Heart right ventricle (tissue), 16 donors: ENCODE measurements at regions of chr4 and their contacts with region 1.

Region 1: GRCh38 chr4:38179690-38180377 is 219.6 kb downstream of the PTTG2 start:
- DNase-seq: peak; percentile 49 to 71
- ATAC-seq: peak; percentile 32 to 76 (median 61)
- H3K4me3 ChIP-seq: no peak overlapping the region
- H3K27ac ChIP-seq: peak overlapping the region in 1 of 10 donors; percentile 1
- H3K4me1 ChIP-seq: peaks cover 2 to 53% (median 21%) of the 10 kb centered on the region in 9 donors
- H3K27me3 ChIP-seq: no peaks in the 10 kb centered on the region
- CTCF ChIP-seq: peak; percentile 89 to 97 (median 94)

Region 2: DNA sequence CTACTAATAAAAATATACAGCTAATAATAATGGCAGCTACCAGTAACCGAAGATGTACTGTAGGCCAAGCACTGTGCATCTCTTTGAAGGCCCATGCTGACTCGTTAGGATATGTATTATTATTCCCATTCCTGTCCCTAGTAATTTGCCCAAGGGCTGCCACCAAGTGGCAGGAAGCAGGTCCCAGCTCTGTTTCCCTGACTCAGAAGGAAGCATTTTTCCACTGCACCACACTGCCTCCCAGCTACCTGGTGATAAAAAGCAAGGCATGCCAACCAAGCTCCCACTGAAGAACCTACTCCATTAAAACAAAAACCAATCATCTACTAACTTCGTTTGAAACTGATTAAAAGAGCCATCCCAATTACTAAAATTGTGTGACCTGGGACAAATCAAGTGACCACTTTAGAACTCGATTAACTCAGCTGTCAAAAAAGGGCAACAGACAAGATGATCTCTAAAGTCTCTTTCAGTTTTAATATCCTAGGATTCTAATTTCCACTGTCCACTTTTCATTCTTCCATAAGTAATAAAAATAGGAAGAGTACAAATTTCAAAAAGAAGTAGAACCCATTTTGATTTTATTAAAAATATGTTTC is 377.7 kb before region 1 on chr4:
- intact Hi-C with region 1: loop called in 1 of 10 experiments (anchors 10 kb)
- DNase-seq: peak in 1 of 2 donors; percentile 53
- ATAC-seq: peak; percentile 30 to 89 (median 79)
- H3K4me3 ChIP-seq: no peak overlapping the region
- H3K27ac ChIP-seq: no peak overlapping the region
- H3K4me1 ChIP-seq: peaks cover 0 to 7% (median 0%) of the 10 kb centered on the region in 9 donors
- H3K27me3 ChIP-seq: no peaks in the 10 kb centered on the region
- CTCF ChIP-seq: peak in 8 of 9 donors; percentile 21 to 77 (median 52)

Region 3: DNA sequence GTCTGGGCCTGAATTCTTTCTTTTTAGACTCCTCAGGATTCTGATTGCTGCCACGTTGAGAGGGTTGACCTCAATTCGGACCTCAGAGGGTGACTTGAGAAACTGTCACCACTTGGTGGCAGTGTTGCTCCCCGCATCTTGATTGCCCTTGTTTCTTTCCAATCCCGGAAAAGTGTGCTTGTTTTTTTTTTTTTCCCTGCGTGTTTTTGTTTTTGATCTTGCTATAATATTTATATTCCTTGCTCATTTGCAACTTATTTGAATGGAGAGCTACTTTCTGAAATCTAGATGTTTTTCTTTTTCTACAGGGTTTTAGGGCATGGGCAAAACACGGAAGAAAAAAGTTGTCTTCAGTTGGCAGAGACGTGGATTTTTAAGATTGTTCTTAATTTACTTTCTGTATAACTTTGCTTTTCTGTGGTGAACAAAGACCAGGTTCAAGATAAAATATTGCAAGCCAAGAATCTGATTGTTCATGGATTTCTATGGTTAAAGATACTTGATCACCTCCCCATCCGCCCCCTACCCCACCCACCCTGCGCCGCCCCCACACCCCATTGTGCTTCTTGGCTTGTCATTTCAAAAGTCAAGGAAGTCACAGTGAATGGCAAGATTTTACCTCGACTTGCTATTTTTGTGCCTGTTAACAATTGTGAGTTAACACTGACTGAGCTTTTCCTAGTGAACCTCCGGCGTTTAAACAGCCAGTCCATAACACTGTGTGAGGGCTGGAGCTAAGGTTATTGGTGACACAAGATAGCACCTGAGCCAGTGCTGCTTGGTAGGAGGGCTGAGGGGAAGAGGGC is 117.5 kb before region 1 on chr4:
- intact Hi-C with region 1: loop called in 8 of 10 experiments (anchors 5 to 10 kb)
- DNase-seq: peak; percentile 74 to 87
- ATAC-seq: peak; percentile 52 to 89 (median 79)
- H3K4me3 ChIP-seq: peak overlapping the region in 8 of 10 donors; percentile 21 to 54 (median 42)
- H3K27ac ChIP-seq: peak overlapping the region in 9 of 10 donors; percentile 18 to 81 (median 75)
- H3K4me1 ChIP-seq: peaks cover 0 to 46% (median 26%) of the 10 kb centered on the region in 9 donors
- H3K27me3 ChIP-seq: no peaks in the 10 kb centered on the region
- CTCF ChIP-seq: peak; percentile 74 to 95 (median 87)

Region 4: GRCh38 chr4:38069271-38069760 is 110.5 kb before region 1 on chr4:
- intact Hi-C with region 1: loop called in 8 of 10 experiments (anchors 5 to 10 kb)
- DNase-seq: no peak
- ATAC-seq: peak in 6 of 8 donors; percentile 23 to 54 (median 36)
- H3K4me3 ChIP-seq: no peak overlapping the region
- H3K27ac ChIP-seq: peak overlapping the region in 7 of 10 donors; percentile 30 to 86 (median 59)
- H3K4me1 ChIP-seq: peaks cover 6 to 80% (median 53%) of the 10 kb centered on the region in 9 donors
- H3K27me3 ChIP-seq: no peaks in the 10 kb centered on the region
- CTCF ChIP-seq: peak in 6 of 9 donors; percentile 18 to 61 (median 37)

Region 5: GRCh38 chr4:38730830-38731646 is 551.2 kb after region 1 on chr4:
- intact Hi-C with region 1: loop called (anchors 1 to 5 kb)
- DNase-seq: peak; percentile 85 to 86
- ATAC-seq: peak; percentile 81 to 93 (median 88)
- H3K4me3 ChIP-seq: no peak overlapping the region
- H3K27ac ChIP-seq: no peak overlapping the region
- H3K4me1 ChIP-seq: peaks cover 0 to 18% (median 4%) of the 10 kb centered on the region in 9 donors
- H3K27me3 ChIP-seq: no peaks in the 10 kb centered on the region
- CTCF ChIP-seq: peak; percentile 91 to 99 (median 97)

Region 6: GRCh38 chr4:38782452-38783108 is 602.7 kb after region 1 on chr4 and contains the start of gene TLR10:
- intact Hi-C with region 1: loop called in 2 of 10 experiments (anchors 5 kb)
- DNase-seq: peak in 1 of 2 donors; percentile 48
- ATAC-seq: peak in 6 of 8 donors; percentile 37 to 67 (median 59)
- H3K4me3 ChIP-seq: no peak within 1 kb of the TSS
- H3K27ac ChIP-seq: no peak within 1 kb of the TSS
- H3K4me1 ChIP-seq: peaks cover 0 to 32% (median 0%) of the 10 kb centered on the region in 9 donors
- H3K27me3 ChIP-seq: no peaks in the 10 kb centered on the region
- CTCF ChIP-seq: peak; percentile 64 to 80 (median 74)
- total RNA-seq, gene TLR10: 0.06 to 0.39 (median 0.11) TPM in 4 of 10 donors, not detected in the others